ENCODE measurements at regions of chr16 and their contacts with region 1.

Region 1: GRCh38 chr16:1826691-1827575 is at the starts of genes FAHD1 and HAGH:
- DNase-seq: peak; percentile 92 to 93
- ATAC-seq: peak; percentile 92
- H3K4me3 ChIP-seq: peak within 1 kb of the TSS; percentile 74 to 99 (median 89)
- H3K27ac ChIP-seq: peak within 1 kb of the TSS; percentile 83 to 99 (median 92)
- H3K4me1 ChIP-seq: peaks cover 56 to 60% of the 10 kb centered on the region in 2 donors
- H3K27me3 ChIP-seq: no peaks in the 10 kb centered on the region
- CTCF ChIP-seq: peak in 2 of 5 experiments; percentile 33 to 37
- POLR2A ChIP-seq: peak; percentile 68 to 70
- total RNA-seq, gene FAHD1: 28.2 to 57.1 (median 49.1) TPM
- total RNA-seq, gene HAGH: 216 to 440 (median 261) TPM

Region 2: DNA sequence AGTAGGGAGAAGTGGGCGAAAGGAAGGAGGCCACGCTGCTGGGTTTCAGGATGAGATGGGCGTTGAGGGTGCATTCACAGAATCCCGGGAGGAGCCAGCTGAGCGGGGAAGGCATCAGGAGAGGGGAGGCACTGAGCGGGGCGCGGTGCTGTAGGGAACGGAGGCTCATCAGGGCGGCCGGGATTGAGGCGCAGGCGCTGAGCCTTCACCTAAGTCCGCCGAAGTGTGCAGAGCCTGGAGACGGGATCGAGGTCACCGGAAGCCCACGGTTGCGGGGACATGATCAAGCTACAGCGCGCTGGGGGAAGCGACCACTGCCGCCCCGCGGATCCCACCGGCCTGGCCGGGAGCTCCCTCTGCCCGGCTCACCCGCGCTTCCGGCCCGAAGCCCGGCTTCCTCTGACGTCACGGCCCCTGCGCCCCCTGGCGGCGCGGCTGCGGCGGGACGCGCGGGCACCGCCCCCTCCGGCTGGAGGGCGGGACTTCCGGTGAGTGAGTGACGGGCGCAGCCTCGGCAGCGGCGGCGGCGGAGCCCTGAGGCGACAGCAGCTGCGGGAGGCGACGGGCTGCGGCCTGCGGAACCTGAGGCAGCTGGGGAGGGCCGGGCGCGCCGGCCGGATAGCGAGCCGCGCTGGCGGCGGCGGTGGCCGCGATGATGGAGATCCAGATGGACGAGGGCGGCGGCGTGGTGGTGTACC is 121.1 kb before region 1 on chr16 and contains the start of gene MAPK8IP3:
- in situ Hi-C with region 1: no loop called
- intact Hi-C with region 1: loop called (anchors 2 kb)
- DNase-seq: peak; percentile 75 to 88
- ATAC-seq: peak; percentile 86 to 91
- H3K4me3 ChIP-seq: peak within 1 kb of the TSS; percentile 85 to 96 (median 88)
- H3K27ac ChIP-seq: peak within 1 kb of the TSS; percentile 89 to 94 (median 92)
- H3K4me1 ChIP-seq: peaks cover 28 to 31% of the 10 kb centered on the region in 2 donors
- H3K27me3 ChIP-seq: no peaks in the 10 kb centered on the region
- CTCF ChIP-seq: peak; percentile 68 to 100 (median 100)
- POLR2A ChIP-seq: peak; percentile 97 to 99
- total RNA-seq, gene MAPK8IP3: 6.5 to 22.6 (median 13.9) TPM

Region 3: GRCh38 chr16:1772736-1773584 is 54.0 kb before region 1 on chr16 and contains the starts of genes EME2 and MRPS34:
- in situ Hi-C with region 1: no loop called
- intact Hi-C with region 1: loop called (anchors 2 kb)
- DNase-seq: peak; percentile 69 to 71
- ATAC-seq: peak; percentile 75 to 77
- H3K4me3 ChIP-seq: peak within 1 kb of the TSS; percentile 70 to 99 (median 79)
- H3K27ac ChIP-seq: peak within 1 kb of the TSS; percentile 77 to 99 (median 94)
- H3K4me1 ChIP-seq: peaks cover 24 to 41% of the 10 kb centered on the region in 2 donors
- H3K27me3 ChIP-seq: no peaks in the 10 kb centered on the region
- CTCF ChIP-seq: peak; percentile 65 to 89 (median 74)
- POLR2A ChIP-seq: peak; percentile 30 to 57
- total RNA-seq, gene EME2: 2.1 to 9.2 (median 6.2) TPM
- total RNA-seq, gene MRPS34: 65.4 to 120 (median 90.0) TPM

Region 4: DNA sequence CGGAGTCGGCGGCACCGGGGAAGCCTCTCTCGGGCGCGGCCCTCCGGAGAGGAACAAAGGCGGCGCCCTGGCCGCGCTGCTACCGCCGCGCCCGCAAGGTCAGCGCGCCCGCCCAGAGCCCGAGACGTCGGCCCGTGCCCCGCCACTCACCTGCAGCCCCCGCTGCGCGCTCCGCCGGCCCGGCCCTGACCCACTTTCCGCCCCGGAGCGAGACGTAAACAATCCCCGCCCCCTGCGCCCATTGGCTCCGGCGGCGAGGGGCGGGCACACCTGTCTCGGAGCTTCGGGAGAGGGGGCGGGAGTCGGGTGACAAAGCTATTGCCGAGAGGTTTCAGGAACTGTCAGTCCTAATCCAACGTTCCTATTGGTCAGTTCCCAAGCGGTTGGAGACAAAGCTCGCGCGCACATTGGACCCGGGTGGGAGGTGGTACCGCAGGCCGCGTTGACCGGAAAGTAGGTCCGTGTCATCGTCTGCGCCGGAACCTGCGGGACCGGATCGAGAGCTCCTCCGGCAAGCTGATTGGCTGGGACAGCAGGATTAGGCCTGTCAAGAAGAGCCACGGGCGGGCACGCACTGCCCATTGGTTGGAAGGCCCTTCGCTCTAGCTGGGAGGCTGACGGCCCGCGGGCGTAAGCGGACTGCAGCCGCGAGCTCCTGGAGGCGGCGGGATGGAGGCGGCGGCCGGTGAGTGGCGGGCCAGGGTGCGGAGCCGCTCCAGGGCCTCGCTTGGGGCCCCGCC is 44.4 kb before region 1 on chr16 and contains the starts of genes NUBP2 and SPSB3:
- in situ Hi-C with region 1: no loop called
- intact Hi-C with region 1: loop called (anchors 2 kb)
- DNase-seq: peak; percentile 100
- ATAC-seq: peak; percentile 97 to 98
- H3K4me3 ChIP-seq: peak within 1 kb of the TSS; percentile 67 to 93 (median 78)
- H3K27ac ChIP-seq: peak within 1 kb of the TSS; percentile 77 to 92 (median 86)
- H3K4me1 ChIP-seq: peaks cover 30 to 38% of the 10 kb centered on the region in 2 donors
- H3K27me3 ChIP-seq: no peaks in the 10 kb centered on the region
- CTCF ChIP-seq: no peak
- POLR2A ChIP-seq: peak; percentile 76 to 93
- total RNA-seq, gene NUBP2: 77.3 to 163 (median 80.7) TPM
- total RNA-seq, gene SPSB3: 86.2 to 161 (median 88.3) TPM

Region 5: GRCh38 chr16:1929578-1930337 is 102.8 kb after region 1 on chr16:
- in situ Hi-C with region 1: no loop called
- intact Hi-C with region 1: loop called (anchors 1 kb)
- DNase-seq: peak; percentile 74 to 84
- ATAC-seq: peak; percentile 85 to 87
- H3K4me3 ChIP-seq: peak overlapping the region; percentile 49 to 69 (median 66)
- H3K27ac ChIP-seq: peak overlapping the region; percentile 52 to 83 (median 76)
- H3K4me1 ChIP-seq: no peaks in the 10 kb centered on the region
- H3K27me3 ChIP-seq: no peaks in the 10 kb centered on the region
- CTCF ChIP-seq: peak in 4 of 5 experiments; percentile 100
- POLR2A ChIP-seq: peak; percentile 17 to 31

Region 6: GRCh38 chr16:1942810-1943726 is 116.1 kb after region 1 on chr16 and contains the start of gene MSRB1:
- in situ Hi-C with region 1: no loop called
- intact Hi-C with region 1: no loop called
- DNase-seq: peak; percentile 100
- ATAC-seq: peak; percentile 59 to 80
- H3K4me3 ChIP-seq: peak within 1 kb of the TSS; percentile 81 to 99 (median 94)
- H3K27ac ChIP-seq: peak within 1 kb of the TSS; percentile 98 to 100 (median 98)
- H3K4me1 ChIP-seq: peaks cover 29 to 58% of the 10 kb centered on the region in 2 donors
- H3K27me3 ChIP-seq: no peaks in the 10 kb centered on the region
- CTCF ChIP-seq: peak in 1 of 5 experiments; percentile 18
- POLR2A ChIP-seq: peak; percentile 98 to 100
- total RNA-seq, gene MSRB1: 16.7 to 40.7 (median 35.2) TPM